Mammary epithelial cell (primary cell): ENCODE measurements at regions of chr22 and their contacts with region 1.

Region 1: DNA sequence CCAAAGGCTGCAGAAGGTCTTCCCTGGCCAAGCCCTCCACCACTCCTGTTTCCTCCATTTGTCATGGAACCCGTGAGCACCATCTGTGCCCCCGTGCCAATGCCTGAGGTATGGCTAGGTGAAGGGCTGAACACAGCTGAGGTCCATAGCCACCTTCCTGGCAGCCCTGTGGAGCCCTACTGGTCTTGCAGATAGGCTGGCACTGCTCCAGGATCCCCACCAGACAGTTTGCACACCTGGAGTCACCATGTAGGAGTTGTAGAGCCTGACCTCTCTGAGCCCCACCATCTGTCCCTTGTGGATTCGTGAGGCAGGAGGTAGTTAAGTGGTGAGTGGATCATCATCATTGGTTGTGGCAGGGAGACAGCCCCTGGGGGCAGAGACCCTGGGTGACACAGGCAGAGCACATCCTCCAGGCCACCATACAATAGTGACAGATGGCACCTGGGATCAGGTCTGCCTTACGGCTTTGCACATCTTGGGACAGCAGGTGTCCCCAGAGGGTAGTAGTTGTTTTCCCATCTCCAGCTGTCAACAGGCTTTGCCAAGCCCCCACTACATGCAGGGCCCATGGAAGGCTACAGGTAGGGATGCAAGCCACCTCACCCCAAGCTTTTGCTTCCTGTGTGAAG is 52.5 kb upstream of the SUSD2 start:
- DNase-seq: no peak
- H3K4me3 ChIP-seq: no peak overlapping the region
- H3K27ac ChIP-seq: no peak overlapping the region
- H3K4me1 ChIP-seq: no peaks in the 10 kb centered on the region
- H3K27me3 ChIP-seq: no peaks in the 10 kb centered on the region
- CTCF ChIP-seq: no peak

Region 2: GRCh38 chr22:24046024-24046423 is 82.7 kb before region 1 on chr22:
- CTCF ChIA-PET with region 1: no interaction called
- dilution Hi-C with region 1: loop called (anchors 5 kb)
- in situ Hi-C with region 1: no loop called
- intact Hi-C with region 1: no loop called
- DNase-seq: no peak
- H3K4me3 ChIP-seq: no peak overlapping the region
- H3K27ac ChIP-seq: no peak overlapping the region
- H3K4me1 ChIP-seq: no peaks in the 10 kb centered on the region
- H3K27me3 ChIP-seq: no peaks in the 10 kb centered on the region
- CTCF ChIP-seq: no peak

Region 3: DNA sequence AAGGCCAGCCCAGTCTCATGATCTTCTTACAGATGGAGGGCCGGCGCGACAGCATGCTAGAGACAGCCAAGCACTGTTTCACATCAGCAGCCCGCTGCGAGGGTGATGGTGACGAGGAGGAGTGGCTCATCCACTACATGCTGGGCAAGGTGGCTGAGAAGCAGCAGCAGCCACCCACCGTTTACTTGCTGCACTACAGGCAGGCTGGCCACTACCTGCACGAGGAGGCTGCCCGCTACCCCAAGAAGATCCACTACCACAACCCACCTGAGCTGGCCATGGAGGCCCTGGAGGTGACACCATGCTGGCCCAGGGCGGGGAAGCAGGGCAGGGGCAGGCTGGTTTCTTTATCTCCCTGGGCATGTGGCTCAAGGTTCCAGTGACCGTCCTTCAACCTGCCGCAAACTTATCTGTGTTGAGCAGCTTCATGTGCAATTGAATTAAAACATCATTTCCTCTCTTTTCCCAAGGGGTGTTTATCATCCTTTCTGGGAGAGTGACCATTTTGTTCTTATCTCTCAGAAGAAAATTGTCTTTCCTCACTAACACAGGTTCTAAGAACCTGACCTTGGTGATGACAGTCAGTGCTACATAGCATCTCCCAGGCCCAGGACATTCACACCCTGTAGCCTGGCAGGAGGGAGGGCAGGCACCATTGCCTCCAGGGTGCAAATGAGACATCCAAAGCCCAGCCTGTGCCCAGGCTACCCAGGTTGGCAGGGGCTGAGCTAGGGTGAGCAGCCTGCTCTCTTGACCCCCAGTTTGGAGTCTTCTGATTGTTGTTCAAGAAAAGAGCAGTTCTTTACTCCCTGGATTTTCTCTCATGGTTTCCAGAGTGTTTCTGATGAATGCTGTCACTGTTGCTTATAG is 37.0 kb before region 1 on chr22:
- CTCF ChIA-PET with region 1: no interaction called
- dilution Hi-C with region 1: loop called (anchors 5 kb)
- in situ Hi-C with region 1: no loop called
- intact Hi-C with region 1: no loop called
- DNase-seq: no peak
- H3K4me3 ChIP-seq: no peak overlapping the region
- H3K27ac ChIP-seq: no peak overlapping the region
- H3K4me1 ChIP-seq: no peaks in the 10 kb centered on the region
- H3K27me3 ChIP-seq: no peaks in the 10 kb centered on the region
- CTCF ChIP-seq: no peak

Region 4: GRCh38 chr22:24200616-24201212 is 72.0 kb after region 1 on chr22:
- CTCF ChIA-PET with region 1: no interaction called
- dilution Hi-C with region 1: loop called (anchors 5 kb)
- in situ Hi-C with region 1: no loop called
- intact Hi-C with region 1: no loop called
- DNase-seq: peak; percentile 74
- H3K4me3 ChIP-seq: no peak overlapping the region
- H3K27ac ChIP-seq: peak overlapping the region; percentile 78
- H3K4me1 ChIP-seq: peaks cover 29% of the 10 kb centered on the region
- H3K27me3 ChIP-seq: no peaks in the 10 kb centered on the region
- CTCF ChIP-seq: no peak